ENCODE measurements at regions of chr2 and their contacts with region 1.

Region 1: GRCh38 chr2:238963161-238963970 is 115.5 kb downstream of the TWIST2 start:
- DNase-seq: peak in 1 of 5 donors; percentile 11
- ATAC-seq: no peak
- H3K4me3 ChIP-seq: no peak overlapping the region
- H3K27ac ChIP-seq: no peak overlapping the region
- H3K4me1 ChIP-seq: no peaks in the 10 kb centered on the region
- H3K27me3 ChIP-seq: no peaks in the 10 kb centered on the region
- CTCF ChIP-seq: no peak
- POLR2A ChIP-seq: no peak

Region 2: DNA sequence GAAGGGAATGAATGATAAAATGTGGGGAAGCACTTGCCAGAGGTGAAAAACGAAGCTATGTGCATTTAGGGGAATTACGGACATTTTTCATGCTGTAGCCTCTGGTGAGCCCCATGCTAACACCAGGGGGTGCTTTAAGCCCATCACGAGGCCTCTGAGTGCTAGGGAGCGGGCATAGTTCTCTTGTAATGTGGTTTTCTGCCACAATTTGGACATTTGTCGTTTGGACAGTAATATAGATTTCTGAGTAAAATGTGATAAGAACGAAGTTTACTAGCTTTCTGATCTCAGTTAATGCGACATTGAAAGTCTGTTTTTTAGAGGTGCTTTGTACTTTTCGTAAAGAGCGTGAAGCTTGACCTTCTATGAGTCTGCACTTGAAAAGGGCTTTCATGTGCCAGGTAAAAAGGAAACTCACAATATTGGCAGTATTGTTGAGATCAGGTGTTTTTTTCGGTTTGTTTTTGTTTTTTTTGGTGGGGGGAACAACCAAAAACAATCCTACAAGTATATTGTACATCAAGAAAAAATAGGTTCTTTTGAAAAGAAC is 592.5 kb before region 1 on chr2:
- intact Hi-C with region 1: loop called in 2 of 10 experiments (anchors 10 kb)
- DNase-seq: peak; percentile 46 to 72 (median 53)
- ATAC-seq: peak; percentile 83 to 97 (median 94)
- H3K4me3 ChIP-seq: no peak overlapping the region
- H3K27ac ChIP-seq: no peak overlapping the region
- H3K4me1 ChIP-seq: no peaks in the 10 kb centered on the region
- H3K27me3 ChIP-seq: no peaks in the 10 kb centered on the region
- CTCF ChIP-seq: peak; percentile 34 to 85 (median 78)
- POLR2A ChIP-seq: no peak

Region 3: GRCh38 chr2:239065962-239066361 is 102.6 kb after region 1 on chr2:
- intact Hi-C with region 1: no loop called
- DNase-seq: no peak
- ATAC-seq: no peak
- H3K4me3 ChIP-seq: no peak overlapping the region
- H3K27ac ChIP-seq: no peak overlapping the region
- H3K4me1 ChIP-seq: no peaks in the 10 kb centered on the region
- H3K27me3 ChIP-seq: no peaks in the 10 kb centered on the region
- CTCF ChIP-seq: no peak
- POLR2A ChIP-seq: no peak